Activated B cell treated with CpG ODN at 0.5 μM for 24 hours (primary cell): ENCODE measurements at regions of chr10 and their contacts with region 1.

Region 1: DNA sequence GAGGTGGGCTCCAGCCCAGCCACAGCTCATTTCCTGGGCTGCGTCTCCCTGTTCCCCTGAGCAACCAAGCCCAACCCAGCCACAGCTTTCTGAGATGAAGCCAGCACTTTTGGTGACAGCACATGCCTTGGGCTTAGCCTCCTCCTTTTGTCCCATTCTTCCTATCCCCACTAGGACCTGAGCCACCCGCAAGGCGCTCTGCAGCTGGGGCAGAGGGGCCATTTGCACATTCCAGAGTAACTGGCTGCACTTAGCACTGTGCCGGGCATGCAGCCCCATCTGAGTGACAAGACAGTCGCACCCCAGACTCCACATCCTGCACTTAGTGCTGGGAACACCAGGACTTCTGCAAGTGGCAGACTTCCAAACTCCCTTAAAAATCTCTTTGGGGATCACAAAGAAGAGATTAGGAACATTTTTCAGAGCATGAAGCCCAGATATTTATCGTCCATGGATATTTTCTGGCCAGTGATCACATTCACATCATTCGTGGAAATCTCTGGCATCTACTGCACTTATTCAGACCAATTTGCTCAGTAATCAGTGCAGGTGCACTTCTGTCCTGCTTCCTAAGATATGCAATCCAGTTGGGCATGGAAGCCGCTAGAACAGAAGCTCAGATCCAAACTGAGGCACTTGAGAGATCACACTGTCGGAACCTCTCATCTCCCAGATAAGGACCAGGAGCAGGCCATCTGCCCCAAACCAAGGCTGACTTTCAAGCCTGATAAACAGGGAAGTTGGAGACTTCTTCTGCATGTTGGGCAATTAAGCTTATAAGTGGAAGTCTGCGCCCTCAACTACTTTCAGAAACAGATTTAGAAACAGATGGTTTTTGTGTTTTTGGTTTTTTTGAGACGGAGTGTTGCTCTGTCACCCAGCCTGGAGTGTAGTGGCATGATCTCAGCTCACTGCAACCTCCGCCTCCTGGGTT is 26.4 kb downstream of the CHST15 start:
- DNase-seq: no peak
- ATAC-seq: no peak
- H3K4me3 Mint-ChIP-seq: no peak overlapping the region
- H3K27ac Mint-ChIP-seq: no peak overlapping the region
- H3K4me1 Mint-ChIP-seq: peaks cover 83% of the 10 kb centered on the region
- H3K27me3 Mint-ChIP-seq: no peaks in the 10 kb centered on the region
- CTCF ChIP-seq: no peak

Region 2: DNA sequence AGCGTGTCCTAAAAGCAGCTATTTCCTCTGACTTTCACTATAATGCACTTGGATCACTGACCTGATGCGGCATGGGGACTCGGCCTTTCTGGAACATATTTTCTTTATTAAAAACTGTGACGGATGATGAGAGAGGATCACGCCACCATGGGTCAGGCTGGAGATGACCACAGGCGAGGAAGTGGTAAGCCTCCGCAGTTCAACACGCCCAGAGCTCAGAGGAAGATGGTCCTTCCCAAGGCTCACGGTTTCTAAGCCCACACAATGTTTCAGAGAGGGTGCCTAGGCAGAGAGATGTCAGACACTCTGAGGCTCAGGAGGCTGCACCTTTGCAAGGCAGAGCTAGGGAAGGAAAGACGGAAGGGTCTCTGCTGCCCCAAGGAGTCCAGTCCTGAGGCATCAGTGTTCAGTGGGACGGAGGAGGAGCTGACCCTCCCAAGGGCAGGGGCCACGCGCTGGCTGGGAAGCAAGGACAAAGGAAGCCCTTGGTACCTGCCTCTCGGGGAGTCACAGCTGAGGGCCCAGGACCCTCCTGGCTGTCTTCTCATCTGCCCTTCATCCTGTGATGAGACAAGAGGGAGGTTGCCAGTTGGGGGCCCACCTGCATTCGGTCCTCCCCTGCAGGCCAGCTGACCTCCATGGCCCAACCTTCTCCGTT is 16.8 kb after region 1 on chr10:
- CTCF ChIA-PET with region 1: no interaction called
- POLR2A ChIA-PET with region 1: interaction called, 5 read pairs
- intact Hi-C with region 1: loop called (anchors 2 kb)
- DNase-seq: no peak
- ATAC-seq: no peak
- H3K4me3 Mint-ChIP-seq: no peak overlapping the region
- H3K27ac Mint-ChIP-seq: no peak overlapping the region
- H3K4me1 Mint-ChIP-seq: peaks cover 63% of the 10 kb centered on the region
- H3K27me3 Mint-ChIP-seq: no peaks in the 10 kb centered on the region
- CTCF ChIP-seq: no peak

Region 3: DNA sequence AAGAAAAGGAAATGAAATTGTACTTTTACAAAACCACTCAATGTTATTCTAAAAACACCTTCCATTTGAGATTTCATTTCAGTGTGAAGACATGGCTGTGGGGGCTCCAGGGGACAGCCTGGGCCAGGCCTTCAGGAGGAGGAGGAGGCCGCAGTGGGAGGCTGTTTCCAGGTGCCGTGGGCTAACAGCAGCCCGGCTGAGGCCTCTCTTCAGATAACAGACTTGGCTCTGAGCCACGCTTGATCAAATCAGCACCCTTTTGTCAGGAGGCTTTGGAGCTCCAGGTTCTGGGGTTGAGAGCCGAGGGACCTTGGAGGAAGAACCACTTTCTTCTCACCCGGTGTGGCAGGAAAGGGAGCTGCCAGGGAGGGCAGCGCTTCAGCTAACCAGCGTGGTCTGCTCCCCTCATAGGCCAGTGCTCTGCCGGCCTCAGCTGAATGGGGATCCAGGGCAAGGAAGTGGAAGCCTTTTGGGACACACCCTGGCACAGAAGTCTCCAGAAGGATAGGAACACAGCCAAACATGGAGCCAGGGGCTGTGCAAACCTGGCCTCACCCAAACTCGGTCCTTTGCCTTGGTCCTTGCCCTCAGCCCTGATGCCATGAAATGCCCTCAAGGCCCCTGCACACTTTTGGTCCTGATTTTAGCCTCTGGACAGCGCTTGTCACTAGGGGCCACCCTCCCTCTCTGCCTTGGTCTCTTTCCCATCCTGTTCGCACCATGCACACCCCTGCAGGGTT is 49.9 kb after region 1 on chr10:
- CTCF ChIA-PET with region 1: no interaction called
- POLR2A ChIA-PET with region 1: no interaction called
- intact Hi-C with region 1: no loop called
- DNase-seq: no peak
- ATAC-seq: no peak
- H3K4me3 Mint-ChIP-seq: no peak overlapping the region
- H3K27ac Mint-ChIP-seq: no peak overlapping the region
- H3K4me1 Mint-ChIP-seq: peaks cover 33% of the 10 kb centered on the region
- H3K27me3 Mint-ChIP-seq: no peaks in the 10 kb centered on the region
- CTCF ChIP-seq: no peak

Region 4: GRCh38 chr10:124565565-124566256 is 498.7 kb after region 1 on chr10:
- CTCF ChIA-PET with region 1: no interaction called
- POLR2A ChIA-PET with region 1: no interaction called
- intact Hi-C with region 1: no loop called
- DNase-seq: no peak
- ATAC-seq: peak; percentile 30
- H3K4me3 Mint-ChIP-seq: no peak overlapping the region
- H3K27ac Mint-ChIP-seq: no peak overlapping the region
- H3K4me1 Mint-ChIP-seq: peaks cover 54% of the 10 kb centered on the region
- H3K27me3 Mint-ChIP-seq: no peaks in the 10 kb centered on the region
- CTCF ChIP-seq: no peak